Activated CD4-positive, alpha-beta memory T cell treated with anti-CD3 and anti-CD28 coated beads for 36 hours (primary cell): ENCODE measurements at regions of chr15 and their contacts with region 1.

Region 1: DNA sequence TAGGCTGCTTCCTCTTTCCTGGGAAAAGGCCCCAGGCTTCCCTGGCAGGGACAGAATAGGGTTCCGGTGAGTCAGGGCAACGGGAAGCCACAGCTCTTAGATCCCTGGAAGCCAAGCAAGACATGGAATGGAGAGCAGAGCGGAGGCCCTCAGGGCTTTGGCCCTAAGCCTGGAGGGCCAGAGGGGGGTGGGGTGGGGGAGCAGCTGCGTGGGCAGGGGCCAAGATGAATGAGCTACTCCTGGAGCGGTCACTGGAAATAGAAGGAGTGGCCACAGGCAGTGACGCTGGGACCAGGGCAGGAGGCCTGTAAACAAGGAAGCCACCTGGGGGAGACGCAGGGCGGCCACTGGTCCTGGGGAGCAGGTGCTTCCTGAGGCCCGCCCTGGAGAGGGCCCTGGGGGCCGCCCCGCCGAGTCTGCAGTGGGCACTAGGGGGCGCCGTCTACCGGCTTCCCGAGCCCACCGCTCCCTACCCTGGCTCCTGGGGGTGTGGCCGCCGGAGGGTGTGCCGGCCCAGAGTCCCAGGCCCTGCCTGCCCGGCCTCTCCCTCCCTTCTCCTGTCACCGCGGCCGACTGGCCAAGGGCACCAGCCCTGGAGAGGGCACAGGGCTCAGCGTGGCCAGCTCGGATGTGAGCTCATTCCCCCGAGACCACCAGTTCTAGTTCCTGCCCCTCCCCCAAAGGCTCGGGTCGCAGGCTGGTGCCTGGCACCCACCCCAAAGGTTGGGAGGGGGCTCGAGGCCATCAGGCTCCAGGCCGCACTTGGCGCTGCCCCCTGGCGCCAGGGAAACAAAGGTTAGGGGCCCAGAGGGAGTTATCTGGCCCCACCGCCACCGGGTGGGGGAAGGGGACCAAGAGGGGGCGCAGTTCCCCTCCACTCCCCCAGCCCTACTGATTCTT is 12.1 kb downstream of the VPS18 start:
- DNase-seq: peak; percentile 88
- H3K4me3 Mint-ChIP-seq: peak overlapping the region; percentile 77
- H3K27ac Mint-ChIP-seq: no peak overlapping the region
- H3K4me1 Mint-ChIP-seq: peaks cover 17% of the 10 kb centered on the region
- H3K27me3 Mint-ChIP-seq: no peaks in the 10 kb centered on the region

Region 2: DNA sequence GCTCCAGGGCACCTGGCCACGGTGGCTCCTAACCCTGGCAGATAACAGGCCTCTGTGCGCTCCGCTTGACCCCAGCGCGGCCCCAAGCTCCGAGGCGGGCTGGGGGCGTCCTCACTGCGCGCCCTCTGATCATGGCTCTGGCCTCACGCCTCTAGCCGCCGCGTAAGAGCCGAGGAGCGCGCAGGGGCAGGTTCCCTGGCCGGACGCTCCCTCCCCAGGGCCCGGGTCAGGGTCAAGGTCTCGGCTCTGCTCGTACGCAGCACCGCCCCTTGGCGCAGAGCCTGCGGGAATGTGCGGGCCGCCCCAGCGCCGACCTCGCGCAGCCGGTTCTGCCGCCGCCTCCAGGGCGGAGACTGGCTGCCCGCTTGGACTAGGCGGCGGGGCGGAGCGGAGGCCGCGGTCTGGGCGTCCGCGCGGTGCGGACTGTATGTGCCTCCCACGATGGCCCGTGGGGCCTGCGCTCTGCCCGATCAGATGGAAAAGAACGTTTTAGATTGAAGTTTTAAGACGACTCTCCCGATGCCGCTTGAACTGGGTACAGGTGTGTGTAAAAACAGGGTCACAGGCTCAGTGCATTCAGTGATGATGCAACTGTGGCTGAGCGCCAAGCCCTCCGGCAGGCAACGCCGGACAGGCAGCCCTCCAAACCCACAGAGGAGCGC is 394.7 kb before region 1 on chr15:
- CTCF ChIA-PET with region 1: no interaction called
- POLR2A ChIA-PET with region 1: no interaction called
- intact Hi-C with region 1: no loop called
- DNase-seq: peak; percentile 23
- H3K4me3 Mint-ChIP-seq: peak overlapping the region; percentile 69
- H3K27ac Mint-ChIP-seq: no peak overlapping the region
- H3K4me1 Mint-ChIP-seq: peaks cover 16% of the 10 kb centered on the region
- H3K27me3 Mint-ChIP-seq: peaks cover 50% of the 10 kb centered on the region

Region 3: GRCh38 chr15:40857601-40858341 is 48.6 kb before region 1 on chr15:
- CTCF ChIA-PET with region 1: interaction called, 54 read pairs
- POLR2A ChIA-PET with region 1: interaction called, 4 read pairs
- intact Hi-C with region 1: no loop called
- DNase-seq: peak; percentile 88
- H3K4me3 Mint-ChIP-seq: no peak overlapping the region
- H3K27ac Mint-ChIP-seq: no peak overlapping the region
- H3K4me1 Mint-ChIP-seq: peaks cover 5% of the 10 kb centered on the region
- H3K27me3 Mint-ChIP-seq: no peaks in the 10 kb centered on the region

Region 4: GRCh38 chr15:40928821-40929659 is 22.7 kb after region 1 on chr15 and contains the start of gene DLL4:
- CTCF ChIA-PET with region 1: interaction called, 50 read pairs
- POLR2A ChIA-PET with region 1: interaction called, 3 read pairs
- intact Hi-C with region 1: loop called (anchors 2 kb)
- DNase-seq: peak; percentile 53
- H3K4me3 Mint-ChIP-seq: peak within 1 kb of the TSS; percentile 51
- H3K27ac Mint-ChIP-seq: no peak within 1 kb of the TSS
- H3K4me1 Mint-ChIP-seq: peaks cover 40% of the 10 kb centered on the region
- H3K27me3 Mint-ChIP-seq: peaks cover 62% of the 10 kb centered on the region
- total RNA-seq, gene DLL4: not detected

Region 5: DNA sequence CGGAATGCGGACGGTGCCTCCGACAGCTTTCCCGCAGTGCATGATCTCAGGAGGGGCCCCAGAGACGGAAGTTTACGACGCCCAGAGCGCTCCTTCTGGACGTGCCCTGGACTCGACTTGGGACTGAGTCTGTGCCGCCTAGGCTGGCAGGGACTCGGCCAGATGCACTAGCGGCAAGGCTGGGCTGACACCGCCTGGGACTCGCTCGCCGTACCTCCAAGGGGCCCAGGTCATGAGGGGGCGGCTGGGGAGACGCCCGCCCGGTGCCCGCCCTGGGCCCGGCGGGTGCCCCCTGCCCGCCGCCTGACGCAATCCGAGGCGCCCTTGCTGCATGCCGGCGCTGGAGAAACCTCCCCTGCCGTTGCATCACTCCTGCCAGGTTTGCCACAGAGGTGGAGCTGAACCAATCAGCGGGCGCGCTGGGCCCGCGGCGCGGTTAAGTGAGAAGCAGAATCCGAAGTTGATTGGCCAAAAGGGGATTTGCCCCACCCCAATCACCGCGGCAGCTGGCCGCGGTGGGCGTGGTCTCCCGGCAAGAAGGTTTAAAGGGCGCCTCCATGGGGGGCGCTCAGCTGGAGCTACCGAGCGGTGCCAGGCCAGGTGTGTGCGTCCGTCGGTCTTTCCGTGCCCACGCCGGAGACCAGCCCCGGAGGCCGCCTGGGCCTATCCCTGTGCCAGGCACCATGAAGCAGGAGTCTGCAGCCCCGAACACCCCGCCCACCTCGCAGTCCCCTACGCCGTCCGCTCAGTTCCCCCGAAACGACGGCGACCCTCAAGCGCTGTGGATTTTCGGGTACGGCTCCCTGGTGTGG is 46.8 kb after region 1 on chr15 and contains the start of gene CHAC1:
- CTCF ChIA-PET with region 1: interaction called, 12 read pairs
- POLR2A ChIA-PET with region 1: interaction called, 6 read pairs
- intact Hi-C with region 1: loop called (anchors 2 kb)
- DNase-seq: peak; percentile 98
- H3K4me3 Mint-ChIP-seq: peak within 1 kb of the TSS; percentile 95
- H3K27ac Mint-ChIP-seq: peak within 1 kb of the TSS; percentile 89
- H3K4me1 Mint-ChIP-seq: peaks cover 38% of the 10 kb centered on the region
- H3K27me3 Mint-ChIP-seq: no peaks in the 10 kb centered on the region
- total RNA-seq, gene CHAC1: 21.6 to 22.3 TPM

Region 6: GRCh38 chr15:41116116-41116871 is 210.0 kb after region 1 on chr15 and contains the start of gene INO80:
- CTCF ChIA-PET with region 1: interaction called, 9 read pairs
- POLR2A ChIA-PET with region 1: interaction called, 3 read pairs
- intact Hi-C with region 1: loop called (anchors 1 kb)
- DNase-seq: peak; percentile 98
- H3K4me3 Mint-ChIP-seq: peak within 1 kb of the TSS; percentile 91
- H3K27ac Mint-ChIP-seq: peak within 1 kb of the TSS; percentile 98
- H3K4me1 Mint-ChIP-seq: peaks cover 12% of the 10 kb centered on the region
- H3K27me3 Mint-ChIP-seq: no peaks in the 10 kb centered on the region
- total RNA-seq, gene INO80: 19.9 to 22.8 TPM

Region 7: GRCh38 chr15:41230650-41231533 is 324.6 kb after region 1 on chr15 and contains the starts of genes CHP1 and EXD1:
- CTCF ChIA-PET with region 1: interaction called, 5 read pairs
- POLR2A ChIA-PET with region 1: no interaction called
- intact Hi-C with region 1: loop called (anchors 1 kb)
- DNase-seq: peak; percentile 98
- H3K4me3 Mint-ChIP-seq: peak within 1 kb of the TSS; percentile 89
- H3K27ac Mint-ChIP-seq: peak within 1 kb of the TSS; percentile 81
- H3K4me1 Mint-ChIP-seq: peaks cover 30% of the 10 kb centered on the region
- H3K27me3 Mint-ChIP-seq: no peaks in the 10 kb centered on the region
- total RNA-seq, gene CHP1: 46.3 to 48.7 TPM
- total RNA-seq, gene EXD1: not detected